ENCODE measurements at regions of chr4 and their contacts with region 1.

Region 1: GRCh38 chr4:47562297-47562696 is 77.2 kb downstream of the ATP10D start:
- DNase-seq: no peak
- H3K4me3 Mint-ChIP-seq: no peak overlapping the region
- H3K27ac Mint-ChIP-seq: no peak overlapping the region
- H3K4me1 Mint-ChIP-seq: no peaks in the 10 kb centered on the region
- H3K27me3 Mint-ChIP-seq: no peaks in the 10 kb centered on the region
- CTCF ChIP-seq: no peak

Region 2: GRCh38 chr4:46931981-46932380 is 630.3 kb before region 1 on chr4:
- CTCF ChIA-PET with region 1: no interaction called
- POLR2A ChIA-PET with region 1: no interaction called
- intact Hi-C with region 1: loop called (anchors 5 kb)
- DNase-seq: peak; percentile 59
- H3K4me3 Mint-ChIP-seq: no peak overlapping the region
- H3K27ac Mint-ChIP-seq: no peak overlapping the region
- H3K4me1 Mint-ChIP-seq: no peaks in the 10 kb centered on the region
- H3K27me3 Mint-ChIP-seq: peaks cover 93% of the 10 kb centered on the region
- CTCF ChIP-seq: peak; percentile 49

Region 3: DNA sequence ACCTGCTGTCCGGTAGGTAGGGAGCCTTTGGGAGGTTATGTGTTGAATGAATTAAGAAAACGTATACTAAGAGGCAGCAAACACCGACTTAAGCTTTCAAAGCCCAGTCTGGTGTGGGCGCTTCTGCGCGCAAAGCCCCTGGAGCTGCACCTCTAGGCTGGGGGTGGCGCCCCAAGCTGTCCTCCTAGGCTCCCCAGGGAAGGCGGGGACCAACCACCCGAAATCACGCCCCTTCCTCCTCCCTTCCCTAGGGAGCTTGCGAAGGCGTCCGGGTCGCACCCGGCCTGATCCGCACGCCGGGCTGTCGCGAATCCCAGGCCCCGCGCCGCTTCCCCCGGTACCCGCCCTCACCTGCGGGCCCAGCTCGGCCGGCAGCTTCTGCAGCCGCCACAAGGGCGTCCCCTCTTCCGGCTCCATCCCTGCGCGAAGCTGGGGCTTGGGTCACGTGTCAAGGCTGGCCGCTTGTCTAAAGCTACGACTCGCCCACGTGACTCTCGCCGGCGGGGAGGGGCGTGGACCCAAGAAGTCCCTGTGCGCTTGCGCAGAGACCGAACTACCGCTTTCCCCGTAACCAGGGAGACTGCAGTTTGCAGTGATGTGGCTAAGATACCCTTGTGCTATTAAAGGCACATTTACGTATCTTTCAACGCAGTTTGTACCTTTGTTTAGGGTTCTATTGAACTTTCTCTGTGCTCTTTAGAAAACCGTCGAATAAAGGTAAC is 98.9 kb before region 1 on chr4 and contains the start of gene COMMD8:
- CTCF ChIA-PET with region 1: interaction called, 17 read pairs
- POLR2A ChIA-PET with region 1: interaction called, 9 read pairs
- intact Hi-C with region 1: loop called (anchors 1 kb)
- DNase-seq: peak; percentile 95
- H3K4me3 Mint-ChIP-seq: peak within 1 kb of the TSS; percentile 83
- H3K27ac Mint-ChIP-seq: peak within 1 kb of the TSS; percentile 54
- H3K4me1 Mint-ChIP-seq: peaks cover 18% of the 10 kb centered on the region
- H3K27me3 Mint-ChIP-seq: no peaks in the 10 kb centered on the region
- CTCF ChIP-seq: no peak
- total RNA-seq, gene COMMD8: 21.1 and 21.3 TPM in 2 replicates

Region 4: GRCh38 chr4:47510506-47511143 is 51.7 kb before region 1 on chr4:
- CTCF ChIA-PET with region 1: interaction called, 7 read pairs
- POLR2A ChIA-PET with region 1: no interaction called
- intact Hi-C with region 1: loop called (anchors 2 kb)
- DNase-seq: no peak
- H3K4me3 Mint-ChIP-seq: no peak overlapping the region
- H3K27ac Mint-ChIP-seq: no peak overlapping the region
- H3K4me1 Mint-ChIP-seq: peaks cover 12% of the 10 kb centered on the region
- H3K27me3 Mint-ChIP-seq: no peaks in the 10 kb centered on the region
- CTCF ChIP-seq: peak; percentile 26

Region 5: DNA sequence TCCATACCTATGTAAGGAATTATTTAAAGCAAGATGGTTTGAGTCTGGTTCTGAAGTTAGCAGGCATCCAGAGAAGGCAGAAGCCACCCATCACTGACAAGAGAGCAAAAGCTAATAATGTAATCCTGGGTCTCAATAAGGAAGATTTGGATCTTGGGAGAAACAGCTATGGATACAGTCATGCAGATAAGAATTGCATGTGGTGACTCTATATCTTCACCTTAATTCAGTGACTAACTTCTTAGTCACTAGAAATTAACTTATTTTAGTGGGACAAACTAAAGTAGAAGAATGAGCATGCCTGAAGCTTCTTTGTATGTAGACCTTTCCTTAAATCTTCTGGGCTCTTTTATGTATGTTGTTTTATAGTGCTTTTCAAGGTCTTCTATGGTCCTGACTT is 10.6 kb before region 1 on chr4:
- CTCF ChIA-PET with region 1: interaction called, 12 read pairs
- POLR2A ChIA-PET with region 1: no interaction called
- intact Hi-C with region 1: no loop called
- DNase-seq: no peak
- H3K4me3 Mint-ChIP-seq: no peak overlapping the region
- H3K27ac Mint-ChIP-seq: no peak overlapping the region
- H3K4me1 Mint-ChIP-seq: no peaks in the 10 kb centered on the region
- H3K27me3 Mint-ChIP-seq: no peaks in the 10 kb centered on the region
- CTCF ChIP-seq: no peak

Region 6: GRCh38 chr4:47752214-47752613 is 189.9 kb after region 1 on chr4:
- CTCF ChIA-PET with region 1: no interaction called
- POLR2A ChIA-PET with region 1: no interaction called
- intact Hi-C with region 1: no loop called
- DNase-seq: no peak
- H3K4me3 Mint-ChIP-seq: no peak overlapping the region
- H3K27ac Mint-ChIP-seq: no peak overlapping the region
- H3K4me1 Mint-ChIP-seq: no peaks in the 10 kb centered on the region
- H3K27me3 Mint-ChIP-seq: no peaks in the 10 kb centered on the region
- CTCF ChIP-seq: no peak